ENCODE measurements at regions of chr16 and their contacts with region 1.

Region 1: GRCh38 chr16:11356573-11357331 is 11.5 kb downstream of the RMI2 start:
- DNase-seq: peak; percentile 73
- ATAC-seq: peak; percentile 79

Region 2: DNA sequence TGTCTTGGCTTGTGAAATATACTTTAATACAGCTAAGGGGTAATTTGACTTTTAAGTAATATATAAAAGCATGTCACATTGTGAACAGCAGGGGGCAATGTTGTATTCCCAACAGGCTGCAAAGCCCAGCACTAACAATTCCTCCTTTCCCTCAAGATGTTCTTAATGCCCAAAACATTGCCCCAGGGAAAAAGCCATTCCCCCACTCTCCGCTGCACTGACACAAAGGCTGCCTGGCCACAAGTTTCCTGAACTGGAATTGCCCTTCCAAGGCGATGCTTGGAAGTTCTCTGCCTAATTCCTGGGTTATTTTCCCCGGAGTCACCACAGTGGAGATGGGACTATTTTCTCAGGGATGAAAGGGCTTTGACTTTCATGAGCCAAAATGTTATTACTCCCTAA is 385.2 kb before region 1 on chr16:
- intact Hi-C with region 1: loop called (anchors 10 kb)
- DNase-seq: no peak
- ATAC-seq: peak; percentile 90

Region 3: DNA sequence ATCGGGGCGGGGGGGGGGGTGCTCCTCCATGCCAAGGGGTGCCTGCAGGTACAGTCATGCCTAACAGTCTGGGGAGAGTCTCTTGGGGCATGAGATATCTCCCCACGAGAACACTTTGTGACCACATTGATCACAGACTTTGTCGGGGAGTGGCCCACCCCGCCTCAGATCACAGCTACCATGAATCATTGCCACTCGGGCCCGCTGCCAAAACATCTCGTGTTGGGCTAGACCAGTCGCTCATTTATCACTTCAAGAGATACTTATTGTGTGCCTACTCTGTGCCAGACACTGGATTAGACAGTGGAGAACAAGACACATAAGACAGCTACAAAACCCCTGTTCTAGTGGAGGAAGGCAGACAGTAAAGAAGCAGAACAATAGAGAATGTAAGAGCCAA is 339.8 kb before region 1 on chr16:
- intact Hi-C with region 1: no loop called
- DNase-seq: no peak
- ATAC-seq: no peak

Region 4: DNA sequence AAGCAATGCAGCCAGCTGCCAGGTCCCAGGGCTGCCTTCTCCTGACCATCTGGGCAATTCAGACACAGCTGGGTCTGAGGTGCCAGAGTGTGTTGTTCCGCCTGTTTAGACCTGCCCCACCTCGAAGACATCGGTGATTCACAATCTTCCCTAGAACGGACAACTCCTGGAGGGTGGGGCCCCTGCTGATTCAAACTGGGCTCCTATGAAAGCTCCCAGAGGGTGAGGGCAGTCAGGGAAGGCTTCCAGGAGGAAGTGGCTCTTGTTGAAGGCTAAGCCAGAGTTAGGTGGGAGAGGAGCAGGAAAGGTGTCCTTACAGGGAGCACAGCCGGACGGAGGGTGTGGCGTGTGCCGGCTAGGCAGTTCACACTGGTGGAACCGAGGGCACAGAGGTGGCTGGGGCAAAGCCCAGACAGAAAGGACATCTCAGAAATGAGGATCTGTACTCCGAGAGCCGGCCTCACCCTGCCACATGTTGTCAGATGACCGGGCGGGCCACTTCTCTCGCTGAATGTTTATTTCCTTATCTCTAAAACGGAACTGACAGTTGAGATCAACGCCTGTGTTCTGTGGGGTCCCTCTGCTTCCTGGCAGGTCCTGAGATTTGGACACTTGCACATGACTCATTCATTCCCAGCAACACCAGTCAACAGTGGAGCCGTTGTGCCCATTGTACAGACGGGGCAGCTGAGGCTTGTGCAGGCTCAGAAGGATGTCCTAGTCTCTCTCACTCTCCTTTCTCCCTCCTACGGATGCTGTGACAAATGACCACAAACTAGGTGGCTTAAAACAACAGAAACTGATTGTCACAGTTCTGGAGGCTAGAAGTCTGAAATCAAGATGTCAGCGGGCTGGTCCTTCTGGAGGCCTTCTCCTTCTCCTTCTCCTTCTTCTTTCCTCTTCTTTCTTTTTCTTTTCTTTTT is 256.9 kb after region 1 on chr16:
- intact Hi-C with region 1: no loop called
- DNase-seq: peak; percentile 75
- ATAC-seq: peak; percentile 40